ENCODE measurements at regions of chr1 and their contacts with region 1.

Region 1: DNA sequence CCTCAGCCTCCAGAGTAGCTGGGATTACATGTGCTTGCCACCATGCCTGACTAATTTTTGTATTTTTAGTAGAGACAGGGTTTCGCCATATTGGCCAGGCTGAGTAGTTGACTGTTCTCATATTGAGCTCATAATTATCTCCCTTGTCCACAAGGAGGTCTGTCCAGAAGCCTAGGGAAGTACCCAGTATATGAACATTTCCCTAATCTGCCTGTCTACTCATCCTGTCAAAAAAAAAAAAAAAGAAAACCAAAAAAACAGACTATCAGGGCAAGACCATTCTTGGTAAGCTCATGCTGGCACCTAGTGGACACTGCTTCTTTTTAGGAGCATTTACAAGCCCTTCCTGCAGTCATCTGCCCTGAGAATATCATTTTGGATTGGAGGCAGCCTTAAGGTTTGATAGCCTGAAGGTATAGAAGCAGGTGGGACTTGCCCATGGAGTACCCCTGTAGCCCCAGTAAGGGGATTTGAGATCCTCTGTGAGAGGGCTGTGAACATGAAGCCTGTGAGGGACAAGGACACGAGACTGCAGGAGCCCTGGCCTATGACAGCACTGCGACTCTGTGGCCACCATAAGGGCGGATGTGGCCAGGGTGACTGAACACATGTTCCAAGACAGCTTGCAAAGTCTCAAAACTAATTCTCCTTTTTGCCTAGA is 10.8 kb upstream of the DUSP12 start:
- DNase-seq: peak; percentile 55
- H3K4me3 ChIP-seq: no peak overlapping the region
- H3K27ac ChIP-seq: no peak overlapping the region
- H3K27me3 ChIP-seq: no peaks in the 10 kb centered on the region
- CTCF ChIP-seq: peak; percentile 70

Region 2: GRCh38 chr1:161486806-161487741 is 251.7 kb before region 1 on chr1:
- CTCF ChIA-PET with region 1: interaction called, 70 read pairs
- POLR2A ChIA-PET with region 1: no interaction called
- DNase-seq: peak; percentile 43
- H3K4me3 ChIP-seq: peak overlapping the region; percentile 37
- H3K27ac ChIP-seq: no peak overlapping the region
- H3K27me3 ChIP-seq: peaks cover 32% of the 10 kb centered on the region
- CTCF ChIP-seq: peak; percentile 79

Region 3: GRCh38 chr1:161531986-161532643 is 206.6 kb before region 1 on chr1:
- CTCF ChIA-PET with region 1: interaction called, 11 read pairs
- POLR2A ChIA-PET with region 1: no interaction called
- DNase-seq: no peak
- H3K4me3 ChIP-seq: peak overlapping the region; percentile 67
- H3K27ac ChIP-seq: no peak overlapping the region
- H3K27me3 ChIP-seq: no peaks in the 10 kb centered on the region
- CTCF ChIP-seq: no peak

Region 4: DNA sequence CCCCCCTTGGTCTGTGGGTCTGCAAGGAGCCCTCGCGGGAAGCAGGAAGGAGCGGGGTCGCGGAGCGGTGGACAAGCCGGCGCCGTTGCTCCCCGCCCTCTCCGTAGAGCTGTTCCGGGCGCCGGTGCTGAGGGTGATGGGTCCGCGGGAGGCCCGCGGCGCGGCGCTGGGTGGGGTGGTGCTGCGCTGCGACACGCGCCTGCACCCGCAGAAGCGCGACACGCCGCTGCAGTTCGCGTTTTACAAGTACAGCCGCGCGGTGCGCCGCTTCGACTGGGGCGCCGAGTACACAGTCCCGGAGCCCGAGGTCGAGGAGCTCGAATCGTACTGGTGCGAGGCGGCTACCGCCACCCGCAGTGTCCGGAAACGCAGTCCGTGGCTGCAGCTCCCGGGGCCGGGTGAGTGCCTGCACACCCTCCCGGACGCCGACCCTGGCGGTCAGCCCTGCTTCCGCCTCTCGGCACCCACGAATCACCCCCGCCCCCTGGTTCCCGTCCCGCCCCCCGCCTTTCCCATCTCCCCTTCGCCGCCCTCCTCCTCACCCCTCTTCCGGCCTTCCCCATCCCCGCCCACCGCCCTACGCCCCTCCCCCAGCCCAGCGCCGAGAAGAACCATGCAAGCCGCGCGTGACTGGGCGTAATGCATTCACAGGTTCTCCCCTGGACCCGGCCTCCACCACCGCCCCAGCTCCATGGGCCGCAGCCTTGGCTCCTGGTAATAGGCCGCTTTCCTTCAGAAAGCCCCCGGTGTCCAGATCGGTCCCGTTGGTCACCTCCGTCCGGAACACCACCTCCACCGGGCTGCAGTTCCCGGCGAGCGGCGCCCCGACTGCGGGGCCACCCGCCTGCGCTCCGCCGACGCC is 11.9 kb before region 1 on chr1:
- CTCF ChIA-PET with region 1: interaction called, 92 read pairs
- POLR2A ChIA-PET with region 1: interaction called, 5 read pairs
- DNase-seq: peak; percentile 69
- H3K4me3 ChIP-seq: peak overlapping the region; percentile 84
- H3K27ac ChIP-seq: peak overlapping the region; percentile 97
- H3K27me3 ChIP-seq: no peaks in the 10 kb centered on the region
- CTCF ChIP-seq: peak; percentile 8; the same call in 1 of the 2 replicates

Region 5: GRCh38 chr1:161749509-161750407 is 11.0 kb after region 1 on chr1 and contains the start of gene DUSP12:
- CTCF ChIA-PET with region 1: interaction called, 29 read pairs
- POLR2A ChIA-PET with region 1: interaction called, 3 read pairs
- DNase-seq: peak; percentile 86
- H3K4me3 ChIP-seq: peak within 1 kb of the TSS; percentile 96
- H3K27ac ChIP-seq: peak within 1 kb of the TSS; percentile 95
- H3K27me3 ChIP-seq: no peaks in the 10 kb centered on the region
- CTCF ChIP-seq: peak; percentile 11; the same call in 1 of the 2 replicates
- polyA plus RNA-seq, gene DUSP12: 34.9 and 41.1 TPM in 2 replicates